H1 (cell line): ENCODE measurements at regions of chr17 and their contacts with region 1.

Region 1: GRCh38 chr17:21098934-21099689 is 27.7 kb upstream of the DHRS7B start:
- DNase-seq: peak; percentile 73 to 77
- H3K4me3 ChIP-seq: peak overlapping the region; percentile 68 to 93 (median 76)
- H3K27ac ChIP-seq: peak overlapping the region; percentile 98
- H3K4me1 ChIP-seq: no peaks in the 10 kb centered on the region; a peak in 1 of 7 replicates
- H3K27me3 ChIP-seq: no peaks in the 10 kb centered on the region
- CTCF ChIP-seq: no peak
- EP300 ChIP-seq: no peak
- POLR2A ChIP-seq: peak in 1 of 2 experiments; percentile 78; a peak in 2 of 3 replicates
- RAD21 ChIP-seq: no peak

Region 2: GRCh38 chr17:21058098-21058893 is 40.8 kb before region 1 on chr17:
- CTCF ChIA-PET with region 1: interaction called, 13 read pairs
- POLR2A ChIA-PET with region 1: interaction called, 3 read pairs
- DNase-seq: no peak
- H3K4me3 ChIP-seq: no peak overlapping the region
- H3K27ac ChIP-seq: no peak overlapping the region
- H3K4me1 ChIP-seq: peaks cover 0 to 3% (median 0%) of the 10 kb centered on the region in 4 experiments; a peak in 4 of 7 replicates
- H3K27me3 ChIP-seq: no peaks in the 10 kb centered on the region
- CTCF ChIP-seq: 0 out of 4 replicates have a peak, but pooled peaks of 1 of the 3 experiments have one; percentile 6
- EP300 ChIP-seq: no peak
- POLR2A ChIP-seq: no peak
- RAD21 ChIP-seq: peak in 1 of 2 experiments; percentile 25; a peak in 1 of 4 replicates

Region 3: DNA sequence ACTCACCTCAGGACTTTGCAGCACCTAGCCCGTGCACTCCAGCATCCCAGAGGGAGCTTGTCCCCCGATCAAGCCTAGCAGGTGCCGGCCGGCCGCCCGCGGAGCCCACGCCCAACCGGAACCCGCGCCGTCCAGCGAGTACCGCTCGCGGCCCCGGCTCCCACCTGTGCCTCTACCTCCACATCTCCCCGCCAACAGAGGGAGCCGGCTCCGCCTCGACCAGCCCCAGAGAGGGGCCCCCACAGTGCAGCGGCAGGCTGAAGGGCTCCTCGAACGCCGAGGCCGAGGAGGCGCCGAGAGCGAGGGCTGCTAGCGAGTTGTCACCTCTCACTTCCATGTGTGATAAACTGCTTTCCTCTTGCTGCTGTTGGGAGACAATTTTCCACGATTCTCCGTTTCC is 13.4 kb before region 1 on chr17:
- CTCF ChIA-PET with region 1: interaction called, 11 read pairs
- POLR2A ChIA-PET with region 1: interaction called, 6 read pairs
- DNase-seq: no peak
- H3K4me3 ChIP-seq: no peak overlapping the region
- H3K27ac ChIP-seq: no peak overlapping the region
- H3K4me1 ChIP-seq: no peaks in the 10 kb centered on the region
- H3K27me3 ChIP-seq: no peaks in the 10 kb centered on the region
- CTCF ChIP-seq: peak in 1 of 3 experiments; percentile 10; a peak in 1 of 4 replicates
- EP300 ChIP-seq: no peak
- POLR2A ChIP-seq: no peak
- RAD21 ChIP-seq: 0 out of 4 replicates have a peak, but pooled peaks of 1 of the 2 experiments have one; percentile 16

Region 4: DNA sequence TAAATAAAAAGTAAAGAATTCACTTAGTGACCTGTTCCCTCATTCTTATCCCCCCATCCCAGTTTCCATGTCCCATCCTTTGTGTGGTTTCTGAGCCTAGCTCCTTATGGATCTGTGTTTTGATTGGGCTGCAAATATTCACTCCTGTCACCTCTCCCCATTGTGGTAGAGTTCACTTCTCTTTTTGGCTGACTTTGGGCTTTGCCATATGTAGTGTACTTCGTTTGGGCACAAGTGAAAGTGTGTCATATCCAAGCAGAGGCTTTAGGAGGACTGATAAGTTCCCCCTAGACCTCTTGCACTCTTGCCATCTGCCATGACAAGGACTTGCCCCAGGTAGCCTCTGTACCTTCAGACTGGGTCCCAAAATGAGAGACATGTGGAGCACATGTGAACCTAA is 14.6 kb after region 1 on chr17:
- CTCF ChIA-PET with region 1: interaction called, 12 read pairs
- POLR2A ChIA-PET with region 1: interaction called, 25 read pairs
- DNase-seq: no peak
- H3K4me3 ChIP-seq: no peak overlapping the region
- H3K27ac ChIP-seq: no peak overlapping the region
- H3K4me1 ChIP-seq: peaks cover 0 to 6% (median 2%) of the 10 kb centered on the region in 4 experiments; a peak in 3 of 7 replicates
- H3K27me3 ChIP-seq: no peaks in the 10 kb centered on the region
- CTCF ChIP-seq: no peak
- EP300 ChIP-seq: no peak
- POLR2A ChIP-seq: no peak
- RAD21 ChIP-seq: no peak

Region 5: GRCh38 chr17:21126645-21127510 is 27.8 kb after region 1 on chr17 and contains the start of gene DHRS7B:
- CTCF ChIA-PET with region 1: interaction called, 9 read pairs
- POLR2A ChIA-PET with region 1: interaction called, 12 read pairs
- DNase-seq: peak; percentile 92 to 98
- H3K4me3 ChIP-seq: peak within 1 kb of the TSS; percentile 66 to 84 (median 76)
- H3K27ac ChIP-seq: peak within 1 kb of the TSS; percentile 87
- H3K4me1 ChIP-seq: peaks cover 0 to 4% (median 2%) of the 10 kb centered on the region in 4 experiments; a peak in 4 of 7 replicates
- H3K27me3 ChIP-seq: no peaks in the 10 kb centered on the region; a peak in 1 of 7 replicates
- CTCF ChIP-seq: no peak
- EP300 ChIP-seq: no peak
- POLR2A ChIP-seq: peak in 1 of 2 experiments; percentile 90; a peak in 2 of 3 replicates
- RAD21 ChIP-seq: no peak; a peak in 1 of 4 replicates
- total RNA-seq, gene DHRS7B: 11.0 and 12.4 TPM in 2 replicates